Mammary epithelial cell (primary cell): ENCODE measurements at regions of chr14 and their contacts with region 1.

Region 1: DNA sequence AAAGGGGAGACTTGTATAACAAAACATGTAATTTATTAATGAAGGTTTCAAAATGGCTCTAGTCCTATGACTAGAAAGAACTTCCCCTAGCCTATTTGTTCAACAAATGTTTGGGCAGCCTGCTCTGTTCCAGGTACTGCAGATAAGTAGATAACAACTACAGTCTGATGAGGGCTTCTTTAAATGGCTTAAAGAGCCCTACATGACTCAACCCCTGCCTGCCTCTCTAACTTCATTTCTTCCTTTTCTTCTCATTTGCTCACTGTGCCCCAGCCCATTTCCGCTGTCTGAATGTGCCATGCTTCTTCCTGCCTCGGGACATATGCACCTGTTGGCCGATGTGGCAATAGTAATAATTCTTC is 21.4 kb downstream of the ALDH6A1 start:
- DNase-seq: no peak
- H3K4me3 ChIP-seq: no peak overlapping the region
- H3K27ac ChIP-seq: peak overlapping the region; percentile 74
- H3K4me1 ChIP-seq: peaks cover 16% of the 10 kb centered on the region
- H3K27me3 ChIP-seq: no peaks in the 10 kb centered on the region
- CTCF ChIP-seq: no peak

Region 2: DNA sequence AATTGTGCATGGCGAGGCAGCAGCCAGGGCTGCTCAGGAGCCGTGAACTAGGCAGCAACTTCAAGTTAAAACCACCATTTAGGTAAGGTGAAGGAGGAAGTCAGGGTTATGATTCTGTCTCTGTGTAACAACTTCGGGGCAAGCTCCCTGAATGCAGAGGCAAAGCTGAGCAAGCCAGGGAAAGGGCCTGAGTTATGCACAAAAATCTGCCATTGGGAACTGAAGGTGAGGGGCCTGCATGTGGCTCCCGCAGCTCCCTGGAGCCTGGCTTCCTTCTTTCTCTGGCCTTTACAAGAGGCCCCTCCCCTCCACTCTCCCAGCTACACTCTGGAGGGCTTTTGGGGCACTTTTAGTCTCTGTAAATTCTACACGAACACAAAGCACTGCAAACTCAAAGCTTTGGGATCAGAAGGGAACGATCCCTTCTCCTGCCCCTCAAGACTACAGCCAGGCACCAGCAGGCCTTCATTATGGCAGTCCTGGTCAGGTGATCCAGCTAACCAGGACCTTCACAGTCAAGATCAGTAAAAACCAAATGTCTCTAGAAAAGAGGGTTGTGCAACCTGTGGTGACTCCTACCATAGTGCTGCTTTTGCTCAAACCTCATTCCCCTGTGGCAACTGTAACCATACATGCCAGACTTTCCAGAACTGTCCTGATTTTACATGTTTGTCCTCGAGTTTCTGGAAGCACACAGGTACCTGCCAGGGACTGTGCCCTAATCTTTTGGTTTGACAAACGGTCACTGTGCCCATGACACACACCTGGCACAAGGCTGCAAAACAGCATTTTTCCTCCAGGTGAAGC is 278.4 kb before region 1 on chr14:
- CTCF ChIA-PET with region 1: no interaction called
- dilution Hi-C with region 1: no loop called
- in situ Hi-C with region 1: no loop called
- intact Hi-C with region 1: no loop called
- DNase-seq: peak; percentile 70
- H3K4me3 ChIP-seq: no peak overlapping the region
- H3K27ac ChIP-seq: peak overlapping the region; percentile 95
- H3K4me1 ChIP-seq: peaks cover 46% of the 10 kb centered on the region
- H3K27me3 ChIP-seq: no peaks in the 10 kb centered on the region
- CTCF ChIP-seq: peak; percentile 9

Region 3: GRCh38 chr14:74084277-74085046 is 21.7 kb after region 1 on chr14 and contains the starts of genes ALDH6A1 and LIN52:
- CTCF ChIA-PET with region 1: no interaction called
- dilution Hi-C with region 1: no loop called
- in situ Hi-C with region 1: no loop called
- intact Hi-C with region 1: loop called (anchors 2 kb)
- DNase-seq: peak; percentile 100
- H3K4me3 ChIP-seq: peak within 1 kb of the TSS; percentile 76 to 79 (median 77)
- H3K27ac ChIP-seq: peak within 1 kb of the TSS; percentile 93
- H3K4me1 ChIP-seq: peaks cover 16% of the 10 kb centered on the region
- H3K27me3 ChIP-seq: no peaks in the 10 kb centered on the region
- CTCF ChIP-seq: peak in 1 of 2 donors; percentile 14
- total RNA-seq, gene ALDH6A1: 8.4 to 10.2 TPM
- total RNA-seq, gene LIN52: 3.8 to 10.0 TPM